PC-3 (cell line): ENCODE measurements at regions of chr12 and their contacts with region 1.

Region 1: DNA sequence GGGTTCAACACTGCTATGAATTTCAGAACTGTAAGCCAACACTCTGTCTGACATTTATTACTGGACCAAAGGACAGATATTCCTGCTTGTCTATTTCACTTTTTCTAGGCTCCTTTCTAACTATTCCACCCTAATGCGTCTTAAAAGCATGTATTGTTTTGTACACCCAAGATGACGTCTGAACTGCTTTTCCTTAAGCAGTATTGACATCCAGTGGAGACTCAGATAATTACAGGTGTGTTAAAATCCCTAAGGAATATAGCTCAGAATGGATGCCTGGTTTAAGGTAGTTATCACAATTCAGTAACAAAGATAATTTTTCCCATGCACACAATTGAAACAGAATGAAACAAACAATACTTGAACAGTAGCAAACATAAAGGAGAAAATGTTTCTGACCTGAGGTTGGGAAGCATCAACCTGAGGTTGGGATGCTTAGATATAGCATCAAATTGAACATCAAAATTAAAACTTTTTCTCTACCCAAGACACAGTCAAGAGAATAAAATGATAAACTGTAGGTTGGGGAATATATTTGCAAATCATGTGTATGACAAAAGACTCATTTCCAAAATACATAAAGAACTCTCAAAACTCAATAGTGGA is 93.7 kb upstream of the PTPRR start:
- DNase-seq: peak; percentile 81
- ATAC-seq: peak; percentile 84
- H3K4me3 ChIP-seq: peak overlapping the region; percentile 33; the same call in 1 of the 2 replicates
- H3K27ac ChIP-seq: no peak overlapping the region
- H3K4me1 ChIP-seq: peaks cover 11% of the 10 kb centered on the region
- H3K27me3 ChIP-seq: no peaks in the 10 kb centered on the region
- CTCF ChIP-seq: peak; percentile 91

Region 2: DNA sequence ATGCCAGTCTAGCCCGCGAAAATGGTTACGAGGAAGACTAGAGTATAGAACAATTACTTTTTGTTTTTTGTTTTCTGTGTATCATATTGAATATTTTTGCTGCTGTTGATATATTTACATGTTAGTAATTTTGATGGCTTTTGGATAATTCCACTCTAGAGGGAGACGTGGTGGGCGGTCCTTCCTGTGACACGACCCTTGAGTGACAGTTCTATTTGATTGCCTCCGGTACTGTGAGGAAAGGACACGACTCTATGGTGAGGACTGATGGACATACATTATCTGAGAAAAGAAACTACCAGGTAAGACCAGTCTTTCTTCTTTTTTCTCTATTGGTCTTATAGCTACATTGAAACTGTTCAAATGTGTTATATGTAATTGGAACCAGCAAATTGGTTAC is 736.3 kb before region 1 on chr12:
- CTCF ChIA-PET with region 1: no interaction called
- POLR2A ChIA-PET with region 1: no interaction called
- intact Hi-C with region 1: no loop called
- DNase-seq: no peak
- ATAC-seq: no peak
- H3K4me3 ChIP-seq: no peak overlapping the region
- H3K27ac ChIP-seq: no peak overlapping the region
- H3K4me1 ChIP-seq: 0 out of 2 replicates have a peak, but pooled peaks cover 5% of the 10 kb centered on the region
- H3K27me3 ChIP-seq: no peaks in the 10 kb centered on the region
- CTCF ChIP-seq: no peak

Region 3: GRCh38 chr12:70831538-70831937 is 182.7 kb before region 1 on chr12:
- CTCF ChIA-PET with region 1: no interaction called
- POLR2A ChIA-PET with region 1: no interaction called
- intact Hi-C with region 1: loop called (anchors 1 kb)
- DNase-seq: peak; percentile 86
- ATAC-seq: peak; percentile 95
- H3K4me3 ChIP-seq: no peak overlapping the region
- H3K27ac ChIP-seq: peak overlapping the region; percentile 24; the same call in 1 of the 2 replicates
- H3K4me1 ChIP-seq: peaks cover 18% of the 10 kb centered on the region
- H3K27me3 ChIP-seq: no peaks in the 10 kb centered on the region
- CTCF ChIP-seq: no peak

Region 4: GRCh38 chr12:70849265-70849960 is 164.9 kb before region 1 on chr12:
- CTCF ChIA-PET with region 1: interaction called, 3 read pairs
- POLR2A ChIA-PET with region 1: no interaction called
- intact Hi-C with region 1: loop called (anchors 1 kb)
- DNase-seq: peak; percentile 61
- ATAC-seq: 0 out of 2 replicates have a peak, but pooled peaks have one; percentile 22
- H3K4me3 ChIP-seq: no peak overlapping the region
- H3K27ac ChIP-seq: no peak overlapping the region
- H3K4me1 ChIP-seq: no peaks in the 10 kb centered on the region
- H3K27me3 ChIP-seq: no peaks in the 10 kb centered on the region
- CTCF ChIP-seq: peak; percentile 83